Heart left ventricle (tissue), 16 donors: ENCODE measurements at regions of chr16 and their contacts with region 1.

Region 1: DNA sequence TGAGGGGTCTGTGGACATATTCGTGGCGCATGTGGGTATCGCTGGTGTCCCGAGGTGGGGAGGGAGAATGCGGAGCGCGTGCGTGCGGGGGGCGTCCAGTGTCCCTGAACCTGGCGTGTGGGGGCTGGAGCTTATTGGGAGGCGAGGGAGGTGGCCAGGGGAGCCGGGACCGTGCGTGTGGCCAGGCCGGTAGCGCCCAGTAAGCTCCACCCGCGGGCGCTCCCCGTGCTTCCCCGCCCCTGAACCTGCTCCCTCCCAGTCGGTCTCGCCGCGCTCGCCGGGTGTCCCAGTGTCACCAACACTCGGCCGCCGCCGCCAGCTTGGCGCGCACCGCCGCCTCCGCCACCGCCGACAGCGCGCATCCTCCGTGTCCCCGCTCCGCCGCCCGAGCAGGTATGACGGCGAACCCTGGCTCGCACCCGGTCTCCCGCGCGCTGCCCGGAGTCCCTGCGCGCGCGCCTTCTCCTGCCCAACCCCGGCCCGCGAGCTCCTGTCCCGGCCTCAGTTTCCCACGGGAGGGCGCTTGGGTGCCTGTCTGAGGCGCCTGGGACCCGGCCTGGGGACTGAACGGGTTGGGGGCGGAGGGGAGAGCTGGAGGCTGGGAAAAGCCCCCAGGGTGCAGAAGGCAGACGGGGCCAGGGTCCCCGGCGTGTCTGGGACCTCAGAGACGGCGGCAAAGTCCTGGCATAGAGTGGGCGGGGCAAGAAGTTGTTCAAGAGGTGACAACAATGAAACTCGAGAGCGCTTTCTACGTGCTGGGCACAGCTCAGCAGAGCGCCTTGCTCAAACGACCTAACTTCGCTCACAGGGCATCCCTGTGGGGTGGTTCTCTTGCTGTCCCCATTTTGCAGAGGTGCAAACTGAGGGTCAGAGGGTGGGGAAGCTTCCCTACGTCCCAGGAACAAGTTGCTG is at the start of gene SCNN1B:
- DNase-seq: no peak
- ATAC-seq: peak in 2 of 4 donors; percentile 31 to 41
- H3K4me3 ChIP-seq: peak within 1 kb of the TSS in 10 of 12 donors; percentile 12 to 35 (median 18)
- H3K27ac ChIP-seq: no peak within 1 kb of the TSS
- H3K4me1 ChIP-seq: peaks cover 0 to 11% (median 0%) of the 10 kb centered on the region in 12 donors
- H3K27me3 ChIP-seq: peaks cover 8 to 48% (median 29%) of the 10 kb centered on the region in 9 donors
- CTCF ChIP-seq: no peak
- POLR2A ChIP-seq: no peak
- total RNA-seq, gene SCNN1B: 0.27 to 1.1 (median 0.71) TPM in 3 of 9 donors, not detected in the others

Region 2: DNA sequence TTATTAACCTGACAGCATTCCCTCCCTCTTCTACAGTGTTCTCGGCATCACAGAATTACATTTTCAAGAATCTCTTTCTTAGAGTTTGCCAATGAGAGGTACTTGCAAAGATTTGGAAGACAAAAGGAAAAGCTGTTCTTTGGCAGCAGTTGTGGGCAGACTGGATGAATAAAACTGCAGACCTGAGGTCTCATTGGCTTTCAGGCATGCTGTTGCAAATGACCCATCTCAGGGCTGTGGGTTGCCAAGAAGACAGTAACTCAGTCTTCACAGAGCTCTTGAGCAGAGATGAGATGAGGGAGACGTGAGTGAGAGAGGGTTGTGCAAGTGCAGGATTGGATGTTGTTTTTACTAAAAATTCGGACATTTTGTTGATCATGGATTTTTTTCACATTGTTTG is 141.7 kb before region 1 on chr16:
- intact Hi-C with region 1: loop called in 1 of 10 experiments (anchors 10 kb)
- DNase-seq: no peak
- ATAC-seq: no peak
- H3K4me3 ChIP-seq: no peak overlapping the region
- H3K27ac ChIP-seq: no peak overlapping the region
- H3K4me1 ChIP-seq: no peaks in the 10 kb centered on the region
- H3K27me3 ChIP-seq: peaks cover 0 to 5% (median 0%) of the 10 kb centered on the region in 9 donors
- CTCF ChIP-seq: no peak
- POLR2A ChIP-seq: no peak